ENCODE measurements at regions of chr3 and their contacts with region 1.

Region 1: DNA sequence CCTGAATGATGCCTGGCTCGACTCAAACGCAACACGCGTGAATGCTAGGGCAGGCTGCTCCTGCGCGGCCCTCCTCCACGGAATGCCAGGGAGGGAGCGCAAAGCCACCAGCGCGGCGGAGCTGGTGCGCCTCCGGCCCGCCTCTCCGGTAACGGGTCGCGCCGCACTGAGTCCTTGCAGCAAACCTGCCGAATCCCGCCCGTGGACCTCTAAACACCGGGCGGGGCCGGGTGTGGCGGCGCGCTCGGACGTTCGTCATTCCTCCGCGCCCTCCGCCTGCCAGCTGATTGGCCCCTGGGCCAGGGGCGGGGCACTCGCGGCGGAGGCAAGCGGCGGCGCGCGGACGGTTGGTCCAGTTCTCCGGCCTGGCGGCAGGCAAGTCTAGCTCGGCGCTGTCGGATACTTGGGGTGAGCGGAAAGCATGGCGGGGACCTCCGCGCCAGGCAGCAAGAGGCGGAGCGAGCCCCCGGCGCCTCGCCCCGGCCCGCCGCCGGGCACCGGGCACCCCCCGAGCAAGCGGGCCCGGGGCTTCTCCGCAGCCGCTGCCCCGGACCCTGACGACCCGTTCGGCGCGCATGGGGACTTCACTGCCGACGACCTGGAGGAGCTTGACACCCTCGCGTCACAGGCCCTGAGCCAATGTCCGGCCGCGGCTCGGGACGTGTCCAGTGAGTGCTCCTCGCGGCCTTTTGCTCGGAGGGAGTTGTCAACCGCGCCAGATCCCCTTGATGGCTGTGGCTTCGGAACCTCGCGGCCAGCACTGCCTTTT is at the start of gene ATRIP:
- DNase-seq: peak; percentile 73 to 93 (median 81)
- ATAC-seq: peak; percentile 99
- H3K4me3 ChIP-seq: peak within 1 kb of the TSS; percentile 90
- H3K4me3 Mint-ChIP-seq: peak within 1 kb of the TSS; percentile 80 to 95 (median 88)
- H3K27ac ChIP-seq: peak within 1 kb of the TSS; percentile 81
- H3K27ac Mint-ChIP-seq: peak within 1 kb of the TSS; percentile 84 to 97 (median 92)
- H3K4me1 ChIP-seq: peaks cover 20 to 22% of the 10 kb centered on the region in 2 donors
- H3K4me1 Mint-ChIP-seq: peaks cover 17 to 53% (median 45%) of the 10 kb centered on the region in 7 donors
- H3K27me3 ChIP-seq: no peaks in the 10 kb centered on the region
- H3K27me3 Mint-ChIP-seq: no peaks in the 10 kb centered on the region
- total RNA-seq, gene ATRIP: 7.9 to 14.2 (median 12.5) TPM

Region 2: DNA sequence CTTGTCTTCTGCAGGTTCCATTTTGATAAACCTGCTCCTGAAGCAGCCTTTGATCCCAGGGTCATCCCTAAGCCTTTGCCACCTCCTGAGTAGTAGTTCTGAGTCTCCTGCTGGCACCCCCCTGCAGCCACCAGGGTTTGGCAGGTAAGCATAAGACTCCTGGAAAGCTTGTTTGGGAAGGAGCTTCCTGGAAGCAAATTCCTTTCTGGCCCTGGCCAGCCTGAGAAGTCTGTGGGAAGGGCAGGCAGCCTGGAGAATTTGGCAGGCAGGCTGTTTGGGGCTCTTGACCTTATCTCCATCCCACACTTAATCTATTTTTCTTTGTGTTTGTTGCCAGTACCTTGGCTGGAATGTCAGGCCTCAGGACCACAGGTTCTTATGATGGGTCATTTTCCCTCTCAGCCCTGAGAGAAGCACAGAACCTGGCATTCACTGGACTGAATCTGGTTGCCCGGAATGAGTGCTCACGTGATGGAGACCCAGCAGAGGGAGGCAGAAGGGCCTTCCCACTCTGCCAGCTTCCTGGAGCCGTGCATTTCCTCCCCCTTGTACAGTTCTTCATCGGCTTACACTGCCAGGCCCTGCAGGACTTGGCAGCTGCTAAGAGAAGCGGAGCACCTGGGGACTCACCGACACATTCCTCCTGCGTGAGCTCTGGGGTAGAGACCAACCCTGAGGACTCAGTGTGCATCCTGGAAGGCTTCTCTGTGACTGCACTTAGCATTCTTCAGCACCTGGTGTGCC is 13.3 kb after region 1 on chr3:
- CTCF ChIA-PET with region 1: interaction called, 4 read pairs
- POLR2A ChIA-PET with region 1: interaction called, 34 read pairs
- intact Hi-C with region 1: no loop called
- DNase-seq: no peak
- ATAC-seq: no peak
- H3K4me3 ChIP-seq: no peak overlapping the region
- H3K4me3 Mint-ChIP-seq: no peak overlapping the region
- H3K27ac ChIP-seq: no peak overlapping the region
- H3K27ac Mint-ChIP-seq: peak overlapping the region in 2 of 9 donors; percentile 8 to 18
- H3K4me1 ChIP-seq: peaks cover 0 to 2% of the 10 kb centered on the region in 2 donors
- H3K4me1 Mint-ChIP-seq: peaks cover 3 to 10% (median 6%) of the 10 kb centered on the region in 7 donors
- H3K27me3 ChIP-seq: no peaks in the 10 kb centered on the region
- H3K27me3 Mint-ChIP-seq: no peaks in the 10 kb centered on the region

Region 3: GRCh38 chr3:48472915-48473616 is 26.5 kb after region 1 on chr3:
- CTCF ChIA-PET with region 1: interaction called, 4 read pairs
- POLR2A ChIA-PET with region 1: interaction called, 13 read pairs
- intact Hi-C with region 1: loop called in 1 of 2 experiments (anchors 1 kb)
- DNase-seq: peak; percentile 79 to 98 (median 95)
- ATAC-seq: peak; percentile 93
- H3K4me3 ChIP-seq: peak overlapping the region; percentile 92
- H3K4me3 Mint-ChIP-seq: peak overlapping the region; percentile 87 to 100 (median 94)
- H3K27ac ChIP-seq: peak overlapping the region; percentile 95
- H3K27ac Mint-ChIP-seq: peak overlapping the region; percentile 90 to 100 (median 99)
- H3K4me1 ChIP-seq: peaks cover 46 to 54% of the 10 kb centered on the region in 2 donors
- H3K4me1 Mint-ChIP-seq: peaks cover 41 to 75% (median 64%) of the 10 kb centered on the region in 7 donors
- H3K27me3 ChIP-seq: no peaks in the 10 kb centered on the region
- H3K27me3 Mint-ChIP-seq: peaks cover 0 to 2% (median 0%) of the 10 kb centered on the region in 5 donors

Measured in naive thymus-derived CD4-positive, alpha-beta T cell (primary cell).